Common myeloid progenitor, CD34-positive (primary cell): ENCODE measurements at regions of chr2 and their contacts with region 1.

Region 1: DNA sequence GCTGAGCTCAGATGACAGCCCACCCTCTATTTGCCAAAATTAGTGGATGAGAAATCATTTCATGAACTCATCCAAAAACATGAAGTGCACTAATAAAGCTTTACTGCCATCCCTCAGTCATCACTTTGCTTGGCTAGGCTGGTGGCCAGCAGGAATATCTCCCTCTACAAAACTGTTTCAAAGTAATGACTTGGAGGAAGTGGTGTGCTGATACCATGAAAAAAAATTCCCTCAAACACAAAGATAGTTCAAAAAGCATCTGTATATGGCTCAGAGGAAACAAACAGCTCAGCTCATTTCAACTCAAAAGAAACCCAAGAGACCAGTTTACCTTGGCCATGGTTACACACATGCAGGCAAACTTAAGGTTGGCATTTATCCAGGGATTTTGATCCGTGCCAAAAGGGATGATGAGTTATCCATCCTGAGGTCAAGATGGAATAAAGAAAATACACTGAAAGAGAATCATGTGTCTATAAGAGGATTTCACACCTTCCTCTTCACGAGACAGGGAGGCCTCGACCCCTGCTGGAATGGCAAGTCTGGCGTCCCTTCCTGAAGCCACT is 18.4 kb upstream of the WIPF1 start:
- DNase-seq: peak in 1 of 3 donors; percentile 30
- H3K4me3 ChIP-seq: no peak overlapping the region
- H3K27ac ChIP-seq: no peak overlapping the region
- H3K4me1 ChIP-seq: peaks cover 6 to 57% (median 27%) of the 10 kb centered on the region in 4 experiments
- H3K27me3 ChIP-seq: no peaks in the 10 kb centered on the region

Region 2: GRCh38 chr2:174603280-174603679 is 12.7 kb before region 1 on chr2:
- CTCF ChIA-PET with region 1: interaction called, 54 read pairs
- POLR2A ChIA-PET with region 1: interaction called, 3 read pairs
- DNase-seq: peak; percentile 79 to 88 (median 84)
- H3K4me3 ChIP-seq: no peak overlapping the region
- H3K27ac ChIP-seq: no peak overlapping the region
- H3K4me1 ChIP-seq: peaks cover 7 to 38% (median 24%) of the 10 kb centered on the region in 4 experiments
- H3K27me3 ChIP-seq: no peaks in the 10 kb centered on the region

Region 3: GRCh38 chr2:174914853-174915760 is 299.2 kb after region 1 on chr2:
- CTCF ChIA-PET with region 1: no interaction called
- POLR2A ChIA-PET with region 1: no interaction called
- DNase-seq: no peak
- H3K4me3 ChIP-seq: no peak overlapping the region
- H3K27ac ChIP-seq: no peak overlapping the region
- H3K4me1 ChIP-seq: no peaks in the 10 kb centered on the region
- H3K27me3 ChIP-seq: no peaks in the 10 kb centered on the region